Dendritic cell treated with granulocyte-macrophage colony-stimulating factor and Interleukin-4, amounts not matched to agents 40 ng/mL and 50 ng/mL, for 4 days (primary cell): ENCODE measurements at regions of chr1 and their contacts with region 1.

Region 1: DNA sequence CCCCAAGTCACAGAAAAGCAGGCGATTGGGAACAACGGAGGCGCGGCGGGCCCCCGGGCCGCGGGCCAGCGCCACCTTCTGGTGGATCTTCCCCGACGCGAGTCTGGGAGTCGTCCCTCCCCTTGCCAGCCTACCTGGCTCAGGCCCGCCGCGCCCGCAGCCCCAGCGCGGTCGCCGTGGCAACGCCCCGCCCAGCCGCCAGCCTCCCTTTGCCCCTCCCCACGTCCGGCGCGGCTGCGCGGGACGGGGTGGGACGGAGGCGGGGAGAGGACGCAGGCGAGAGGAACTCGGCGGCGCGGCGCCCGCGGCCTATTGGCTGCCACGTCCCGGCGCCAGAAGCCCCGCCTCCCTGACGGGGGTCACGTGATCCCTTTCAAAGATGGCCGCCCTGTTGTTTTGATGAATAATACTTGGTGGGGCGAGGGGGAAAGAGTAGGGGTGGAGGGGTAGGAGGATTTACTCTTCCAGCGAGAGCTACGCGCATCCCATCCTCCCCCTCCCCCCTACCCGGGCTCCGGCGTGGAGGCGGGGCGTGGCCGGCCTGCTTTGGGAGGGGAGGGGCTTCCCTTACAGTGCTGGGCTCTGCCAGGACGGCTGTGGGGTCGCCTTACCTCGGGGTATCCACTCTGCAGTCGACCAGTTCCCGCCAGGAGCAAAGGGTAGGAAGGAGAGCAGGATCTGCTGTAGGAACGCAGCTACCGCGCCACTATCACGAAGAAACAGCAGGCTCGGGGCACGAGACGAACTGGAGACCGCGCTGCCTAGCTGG is at the start of gene UBE4B:
- H3K4me3 Mint-ChIP-seq: peak within 1 kb of the TSS; percentile 90
- H3K27ac Mint-ChIP-seq: peak within 1 kb of the TSS; percentile 91
- H3K4me1 Mint-ChIP-seq: peaks cover 33% of the 10 kb centered on the region
- H3K27me3 Mint-ChIP-seq: no peaks in the 10 kb centered on the region

Region 2: DNA sequence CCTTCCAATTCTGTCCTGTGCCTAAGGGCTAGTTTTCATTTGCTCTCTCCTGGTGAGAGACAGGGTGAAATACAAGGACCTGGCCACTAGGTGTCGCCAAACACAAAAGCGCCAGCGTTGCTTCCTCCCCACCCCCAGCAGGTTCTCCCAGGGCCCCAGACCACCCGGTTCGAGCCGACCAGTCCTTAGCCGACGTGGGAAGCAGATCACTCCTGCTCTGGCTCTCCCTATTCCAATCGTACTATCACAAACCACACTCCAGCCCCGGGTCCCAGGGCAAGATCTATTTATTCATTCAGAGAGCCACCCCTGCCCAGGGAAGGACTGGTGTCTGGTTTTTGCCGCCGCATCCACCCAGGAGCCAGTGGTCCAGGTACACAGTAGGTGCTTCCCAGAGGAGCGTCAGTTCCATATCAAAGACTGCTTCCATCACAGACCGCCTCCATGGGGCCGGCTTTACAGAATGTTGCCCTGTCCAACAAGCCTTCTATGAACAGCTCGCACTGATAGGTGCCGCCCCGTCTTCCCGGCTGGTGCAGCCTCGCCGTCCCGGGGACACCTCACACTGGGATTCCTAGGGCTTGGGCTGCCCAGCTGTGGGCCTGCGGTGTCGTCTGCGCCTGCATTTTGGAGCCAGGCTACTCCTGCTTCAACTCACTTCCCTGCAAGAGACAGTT is 157.7 kb before region 1 on chr1:
- intact Hi-C with region 1: loop called (anchors 5 kb)
- H3K4me3 Mint-ChIP-seq: no peak overlapping the region
- H3K27ac Mint-ChIP-seq: peak overlapping the region; percentile 1
- H3K4me1 Mint-ChIP-seq: peaks cover 18% of the 10 kb centered on the region
- H3K27me3 Mint-ChIP-seq: no peaks in the 10 kb centered on the region

Region 3: GRCh38 chr1:9910425-9911178 is 122.2 kb before region 1 on chr1:
- intact Hi-C with region 1: loop called (anchors 1 kb)
- H3K4me3 Mint-ChIP-seq: peak overlapping the region; percentile 90
- H3K27ac Mint-ChIP-seq: peak overlapping the region; percentile 98
- H3K4me1 Mint-ChIP-seq: peaks cover 55% of the 10 kb centered on the region
- H3K27me3 Mint-ChIP-seq: no peaks in the 10 kb centered on the region

Region 4: GRCh38 chr1:9942939-9943788 is 89.6 kb before region 1 on chr1 and contains the starts of genes LZIC and NMNAT1:
- intact Hi-C with region 1: loop called (anchors 2 kb)
- H3K4me3 Mint-ChIP-seq: peak within 1 kb of the TSS; percentile 87
- H3K27ac Mint-ChIP-seq: peak within 1 kb of the TSS; percentile 97
- H3K4me1 Mint-ChIP-seq: peaks cover 22% of the 10 kb centered on the region
- H3K27me3 Mint-ChIP-seq: no peaks in the 10 kb centered on the region

Region 5: DNA sequence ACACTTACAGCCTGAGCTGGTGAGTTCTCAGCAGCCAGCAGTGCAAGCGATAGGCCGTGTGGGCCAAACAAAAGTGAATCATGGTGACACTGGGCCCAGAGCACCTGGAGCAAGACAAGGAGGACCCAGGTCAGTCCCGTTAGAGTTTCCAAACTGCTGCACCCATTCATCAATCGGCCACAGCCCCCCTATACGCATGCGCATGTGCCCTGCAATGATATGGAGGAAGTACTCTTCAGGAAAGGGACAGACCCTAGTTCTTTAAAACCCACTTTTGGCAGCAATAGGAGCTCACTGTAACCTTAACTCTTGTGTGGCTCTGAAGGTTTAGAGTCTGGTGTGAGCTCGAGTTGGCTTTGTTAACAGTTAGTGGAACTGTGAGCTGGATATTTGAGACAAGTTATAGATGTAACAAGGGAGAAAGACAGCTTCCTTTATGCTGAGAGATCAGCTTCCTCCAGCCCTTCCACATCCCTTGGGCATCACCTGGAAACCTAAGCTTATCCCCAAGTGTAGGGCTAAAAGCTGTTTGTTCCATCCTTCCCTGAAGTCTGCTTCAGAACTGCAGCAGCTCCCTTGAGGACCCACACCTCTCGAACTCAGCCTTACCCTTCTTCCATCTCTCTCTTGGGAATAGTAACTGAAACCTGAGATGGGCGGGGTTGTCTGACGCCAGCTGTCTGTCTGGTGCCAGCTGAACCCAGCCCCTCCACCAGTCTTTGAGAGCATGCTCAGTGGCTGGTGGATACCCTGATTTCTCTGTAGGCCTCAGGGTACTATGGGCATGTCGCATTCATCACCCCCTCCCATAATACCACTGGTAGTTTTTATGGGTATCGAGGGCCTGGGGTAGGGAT is 71.8 kb before region 1 on chr1:
- intact Hi-C with region 1: no loop called
- H3K4me3 Mint-ChIP-seq: no peak overlapping the region
- H3K27ac Mint-ChIP-seq: no peak overlapping the region
- H3K4me1 Mint-ChIP-seq: no peaks in the 10 kb centered on the region
- H3K27me3 Mint-ChIP-seq: no peaks in the 10 kb centered on the region

Region 6: DNA sequence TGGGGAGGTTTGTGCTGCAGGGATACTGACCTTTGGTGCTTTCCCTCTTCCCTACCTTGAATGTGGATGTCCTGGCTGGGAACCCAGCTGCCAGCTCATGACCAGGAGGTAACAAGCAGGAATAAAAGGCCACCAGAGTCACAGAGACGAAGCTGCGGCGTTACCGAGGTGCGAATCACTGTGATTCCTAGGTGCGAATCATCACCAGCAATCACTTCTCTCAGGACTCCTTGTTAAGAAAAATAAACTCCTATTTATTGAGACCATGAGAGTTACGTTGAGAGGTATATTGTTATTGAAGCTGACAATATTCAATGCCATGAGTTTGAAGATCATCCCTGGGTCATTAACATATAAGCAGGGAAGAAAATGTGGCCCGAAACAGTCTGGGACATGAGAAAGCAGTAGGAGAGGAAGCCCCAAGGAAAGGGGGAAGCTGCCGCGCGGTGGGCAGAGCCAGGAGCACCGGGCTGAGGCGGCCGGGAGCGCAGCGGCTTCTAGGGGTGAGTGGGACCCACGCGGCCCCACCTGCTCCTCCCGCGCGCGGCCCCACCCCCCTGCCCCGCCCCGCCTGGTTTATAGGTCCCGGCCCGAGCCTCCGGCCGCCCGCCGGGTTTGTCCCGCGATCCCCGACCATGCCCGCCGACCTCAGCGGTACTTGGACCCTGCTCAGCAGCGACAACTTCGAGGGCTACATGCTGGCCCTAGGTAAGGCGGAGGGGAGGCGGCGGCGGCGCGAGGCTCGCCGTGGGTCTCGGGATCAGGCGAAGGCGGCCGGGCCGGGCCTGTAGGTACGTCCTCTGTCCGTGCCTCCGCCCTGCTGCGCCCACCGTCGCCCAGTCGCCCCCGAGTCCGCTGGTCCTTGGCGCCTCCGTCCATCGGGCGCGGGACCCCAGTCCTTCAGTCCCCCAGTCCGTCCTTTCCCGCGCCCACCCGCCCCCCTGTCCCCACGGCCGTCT is 35.9 kb before region 1 on chr1 and contains the start of gene RBP7:
- intact Hi-C with region 1: loop called (anchors 5 kb)
- H3K4me3 Mint-ChIP-seq: peak within 1 kb of the TSS; percentile 76
- H3K27ac Mint-ChIP-seq: no peak within 1 kb of the TSS
- H3K4me1 Mint-ChIP-seq: peaks cover 27% of the 10 kb centered on the region
- H3K27me3 Mint-ChIP-seq: peaks cover 26% of the 10 kb centered on the region